Activated B cell treated with CpG ODN at 0.5 μM for 24 hours (primary cell): ENCODE measurements at regions of chr13 and their contacts with region 1.

Region 1: GRCh38 chr13:29484236-29484635 is 111.3 kb downstream of the SLC7A1 start:
- DNase-seq: no peak
- ATAC-seq: peak; percentile 94
- H3K4me3 Mint-ChIP-seq: no peak overlapping the region
- H3K27ac Mint-ChIP-seq: no peak overlapping the region
- H3K4me1 Mint-ChIP-seq: peaks cover 11% of the 10 kb centered on the region
- H3K27me3 Mint-ChIP-seq: peaks cover 12% of the 10 kb centered on the region
- CTCF ChIP-seq: no peak

Region 2: DNA sequence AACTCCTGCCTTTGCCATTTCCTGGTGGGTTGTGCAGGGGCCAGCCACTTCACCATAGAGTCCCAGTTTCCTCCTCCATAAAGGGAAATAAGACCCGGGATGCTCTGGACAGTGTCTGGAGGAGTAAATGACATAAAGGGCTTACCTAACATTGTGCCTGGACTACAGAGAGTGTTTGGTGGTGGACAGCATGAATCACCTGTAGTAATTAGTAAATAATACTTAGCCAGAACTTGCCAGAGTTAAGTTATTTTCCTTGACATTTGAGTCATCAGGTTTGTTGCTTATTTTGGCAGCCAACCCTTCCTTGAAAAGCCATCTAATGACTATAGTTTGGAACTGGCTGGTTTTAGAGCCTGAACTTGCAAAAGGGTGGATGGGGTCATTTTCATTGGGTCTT is 47.9 kb before region 1 on chr13:
- CTCF ChIA-PET with region 1: no interaction called
- POLR2A ChIA-PET with region 1: no interaction called
- intact Hi-C with region 1: loop called (anchors 1 kb)
- DNase-seq: no peak
- ATAC-seq: no peak
- H3K4me3 Mint-ChIP-seq: no peak overlapping the region
- H3K27ac Mint-ChIP-seq: no peak overlapping the region
- H3K4me1 Mint-ChIP-seq: peaks cover 14% of the 10 kb centered on the region
- H3K27me3 Mint-ChIP-seq: peaks cover 10% of the 10 kb centered on the region
- CTCF ChIP-seq: no peak

Region 3: DNA sequence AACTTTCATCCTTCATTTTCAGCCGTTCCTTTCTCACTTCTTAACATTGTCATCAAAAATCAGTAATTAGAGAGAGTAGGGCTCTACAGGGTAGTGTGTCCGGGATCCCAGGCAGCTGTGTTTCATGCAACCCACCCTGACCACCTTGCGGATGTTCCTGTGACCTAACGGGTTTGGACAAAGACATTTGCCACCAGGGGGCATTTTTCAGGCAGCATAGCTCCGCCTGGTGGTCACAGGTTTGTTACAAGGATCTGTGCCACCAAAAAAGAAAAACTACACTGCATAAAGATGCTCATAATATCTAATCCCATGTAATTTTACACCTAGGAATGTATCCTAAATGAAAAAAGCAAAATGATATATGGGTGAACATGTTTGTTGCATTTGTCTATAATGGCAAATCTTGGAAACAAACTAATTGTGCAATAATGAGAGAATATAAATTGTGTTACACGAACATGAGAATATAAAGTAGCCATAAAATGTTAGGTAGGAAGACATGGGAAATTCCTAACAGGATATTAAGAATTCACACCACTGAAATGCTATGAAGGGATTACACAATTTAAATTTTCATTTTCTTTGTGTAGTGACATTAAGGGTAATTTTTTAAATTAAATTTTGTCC is 11.8 kb before region 1 on chr13:
- CTCF ChIA-PET with region 1: interaction called, 10 read pairs
- POLR2A ChIA-PET with region 1: no interaction called
- intact Hi-C with region 1: no loop called
- DNase-seq: no peak
- ATAC-seq: peak; percentile 72
- H3K4me3 Mint-ChIP-seq: peak overlapping the region; percentile 24
- H3K27ac Mint-ChIP-seq: no peak overlapping the region
- H3K4me1 Mint-ChIP-seq: peaks cover 7% of the 10 kb centered on the region
- H3K27me3 Mint-ChIP-seq: peaks cover 6% of the 10 kb centered on the region
- CTCF ChIP-seq: peak; percentile 91

Region 4: GRCh38 chr13:29496240-29496712 is 12.0 kb after region 1 on chr13:
- CTCF ChIA-PET with region 1: no interaction called
- POLR2A ChIA-PET with region 1: interaction called, 10 read pairs
- intact Hi-C with region 1: loop called (anchors 1 kb)
- DNase-seq: peak; percentile 38
- ATAC-seq: peak; percentile 70
- H3K4me3 Mint-ChIP-seq: peak overlapping the region; percentile 71
- H3K27ac Mint-ChIP-seq: peak overlapping the region; percentile 68
- H3K4me1 Mint-ChIP-seq: peaks cover 36% of the 10 kb centered on the region
- H3K27me3 Mint-ChIP-seq: no peaks in the 10 kb centered on the region
- CTCF ChIP-seq: no peak